PC-3 (cell line): ENCODE measurements at regions of chr1 and their contacts with region 1.

Region 1: DNA sequence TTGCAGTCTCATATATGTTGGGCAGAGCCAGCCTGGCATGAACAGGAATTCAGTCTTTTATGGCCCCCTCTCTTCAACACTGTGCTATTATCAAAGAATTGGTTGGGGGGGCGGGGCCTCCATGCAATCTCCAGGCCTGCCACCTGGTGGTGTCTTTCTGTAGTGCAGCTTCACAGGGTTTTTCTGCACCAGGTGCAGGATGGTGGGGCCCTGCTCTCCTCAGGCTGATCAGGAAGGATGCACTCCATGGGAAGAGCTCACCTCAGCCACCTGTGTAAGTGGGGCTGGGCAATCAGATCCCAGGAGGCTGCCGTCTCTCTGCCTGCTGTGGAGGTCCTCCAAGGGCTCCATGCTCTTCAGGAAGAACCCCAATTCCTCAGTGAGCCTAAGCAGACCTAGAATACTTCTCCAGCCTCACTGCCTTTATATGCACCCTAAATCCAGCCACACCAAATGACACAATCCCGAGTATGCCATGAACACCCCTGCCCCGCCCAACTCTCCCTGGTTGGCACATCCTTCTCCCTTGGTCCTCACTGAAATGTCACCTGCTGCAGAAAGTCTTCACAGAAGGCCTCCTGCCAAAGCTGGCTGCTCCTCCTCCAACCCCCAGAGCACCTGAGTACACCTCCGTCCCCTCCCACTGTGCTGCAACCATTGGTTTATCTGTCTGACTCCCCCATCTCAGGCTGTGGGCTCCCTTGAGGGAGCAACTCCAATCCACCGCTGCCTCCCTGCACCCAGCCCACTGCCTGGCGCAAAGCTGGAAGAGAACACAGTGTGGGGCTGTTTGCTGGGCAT is 16.5 kb downstream of the STK40 start:
- DNase-seq: peak; percentile 87
- ATAC-seq: peak; percentile 29
- H3K4me3 ChIP-seq: no peak overlapping the region
- H3K27ac ChIP-seq: no peak overlapping the region
- H3K4me1 ChIP-seq: peaks cover 37% of the 10 kb centered on the region
- H3K27me3 ChIP-seq: no peaks in the 10 kb centered on the region
- CTCF ChIP-seq: peak; percentile 84

Region 2: GRCh38 chr1:36203554-36204346 is 165.5 kb before region 1 on chr1:
- CTCF ChIA-PET with region 1: no interaction called
- POLR2A ChIA-PET with region 1: no interaction called
- intact Hi-C with region 1: no loop called
- DNase-seq: no peak
- ATAC-seq: no peak
- H3K4me3 ChIP-seq: no peak overlapping the region
- H3K27ac ChIP-seq: no peak overlapping the region
- H3K4me1 ChIP-seq: peaks cover 13% of the 10 kb centered on the region; the same call in 1 of the 2 replicates
- H3K27me3 ChIP-seq: no peaks in the 10 kb centered on the region
- CTCF ChIP-seq: no peak

Region 3: DNA sequence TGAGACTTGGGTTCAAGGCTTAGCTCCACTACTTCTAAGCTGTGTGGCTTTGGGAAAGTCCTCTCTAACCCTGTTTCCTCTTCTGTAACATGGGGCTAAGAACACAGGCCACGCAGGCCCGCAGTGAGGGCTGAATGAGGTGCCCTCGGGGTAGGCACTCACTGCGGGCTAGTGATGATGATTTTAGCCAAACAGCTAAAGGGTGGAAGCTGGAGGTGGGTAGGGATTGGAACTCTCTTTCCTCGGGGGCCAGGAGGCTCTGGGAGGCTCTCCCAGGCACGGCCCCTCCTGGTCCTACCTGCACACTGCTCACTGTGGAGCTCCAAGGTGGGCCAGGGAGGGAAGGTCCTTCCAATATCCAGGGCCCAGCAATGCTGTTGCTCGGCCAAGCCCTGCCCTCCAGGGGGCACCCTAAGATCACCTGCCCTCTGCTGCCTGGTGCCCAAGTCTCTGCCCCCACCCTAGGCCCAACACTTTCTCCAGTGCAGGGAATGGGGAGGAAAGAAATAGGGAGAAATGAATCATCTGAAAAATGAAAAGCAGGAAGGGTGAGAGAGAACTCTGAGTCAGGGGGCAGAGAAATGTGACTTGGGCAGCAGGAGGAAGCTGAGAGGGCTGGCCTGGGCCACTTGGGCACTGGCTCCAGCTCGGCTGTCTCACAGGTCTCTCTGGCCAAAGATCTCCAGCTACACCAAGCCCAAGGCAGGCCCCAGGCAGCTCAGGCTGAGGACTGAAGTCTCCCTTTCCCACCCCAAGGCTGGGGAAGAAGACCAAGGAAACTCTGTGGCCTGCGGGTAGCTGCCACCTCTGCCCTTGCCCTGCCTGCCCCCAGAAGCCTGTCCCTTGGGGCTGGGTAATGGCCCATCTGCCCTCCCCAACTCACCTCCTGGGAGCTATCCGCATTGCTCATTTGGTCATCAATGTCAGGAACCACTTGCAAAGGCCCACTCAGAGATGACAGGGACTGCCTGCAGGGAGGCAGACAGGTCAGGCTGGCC is 26.5 kb before region 1 on chr1:
- CTCF ChIA-PET with region 1: interaction called, 17 read pairs
- POLR2A ChIA-PET with region 1: no interaction called
- intact Hi-C with region 1: loop called (anchors 1 kb)
- DNase-seq: peak; percentile 87
- ATAC-seq: peak; percentile 84
- H3K4me3 ChIP-seq: no peak overlapping the region
- H3K27ac ChIP-seq: peak overlapping the region; percentile 82
- H3K4me1 ChIP-seq: peaks cover 15% of the 10 kb centered on the region
- H3K27me3 ChIP-seq: no peaks in the 10 kb centered on the region
- CTCF ChIP-seq: peak; percentile 93

Region 4: DNA sequence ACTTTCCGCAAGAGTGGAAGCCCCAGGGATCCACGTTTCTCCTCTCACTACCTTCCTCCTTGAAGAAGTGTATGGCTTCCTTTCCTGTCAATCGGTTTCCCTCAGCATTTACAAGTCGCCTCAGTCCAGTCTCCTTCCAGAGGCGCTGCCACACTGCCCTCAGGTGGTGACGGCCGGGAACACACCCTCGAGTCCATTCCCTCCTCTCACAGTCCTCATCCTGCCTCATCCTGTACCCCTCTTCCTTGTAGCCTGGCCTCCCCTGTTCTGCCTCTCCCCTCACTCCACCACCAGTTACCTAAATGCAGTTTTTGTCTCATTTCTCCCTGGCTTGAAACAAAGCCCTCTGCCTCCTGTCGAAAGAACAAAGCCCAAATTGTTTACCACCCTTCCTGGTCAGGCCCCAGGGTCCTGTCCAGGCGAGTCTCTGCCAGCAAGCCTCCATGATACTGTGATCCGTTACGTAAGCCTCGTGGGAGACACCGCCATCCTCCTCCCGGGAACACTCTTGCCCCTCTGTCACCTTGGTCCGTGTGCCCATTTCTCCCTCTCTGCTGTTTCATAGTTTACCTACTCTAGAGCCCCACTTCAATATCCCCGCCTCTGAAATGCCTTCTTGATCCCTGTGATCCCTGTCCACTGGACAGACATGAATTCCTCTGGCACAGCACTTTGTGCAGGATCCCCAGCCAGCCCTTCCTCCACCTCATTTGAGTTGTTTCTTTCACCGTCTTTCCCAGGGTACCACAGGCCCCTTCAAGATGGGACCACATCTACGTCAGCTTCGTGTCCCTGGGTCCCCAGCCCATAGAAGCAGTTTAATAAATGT is 51.8 kb after region 1 on chr1:
- CTCF ChIA-PET with region 1: no interaction called
- POLR2A ChIA-PET with region 1: interaction called, 5 read pairs
- intact Hi-C with region 1: loop called (anchors 1 kb)
- DNase-seq: peak; percentile 95
- ATAC-seq: peak; percentile 92
- H3K4me3 ChIP-seq: no peak overlapping the region
- H3K27ac ChIP-seq: no peak overlapping the region
- H3K4me1 ChIP-seq: peaks cover 20% of the 10 kb centered on the region
- H3K27me3 ChIP-seq: no peaks in the 10 kb centered on the region
- CTCF ChIP-seq: peak; percentile 94